HepG2 (cell line): ENCODE measurements at regions of chr2 and their contacts with region 1.

Region 1: DNA sequence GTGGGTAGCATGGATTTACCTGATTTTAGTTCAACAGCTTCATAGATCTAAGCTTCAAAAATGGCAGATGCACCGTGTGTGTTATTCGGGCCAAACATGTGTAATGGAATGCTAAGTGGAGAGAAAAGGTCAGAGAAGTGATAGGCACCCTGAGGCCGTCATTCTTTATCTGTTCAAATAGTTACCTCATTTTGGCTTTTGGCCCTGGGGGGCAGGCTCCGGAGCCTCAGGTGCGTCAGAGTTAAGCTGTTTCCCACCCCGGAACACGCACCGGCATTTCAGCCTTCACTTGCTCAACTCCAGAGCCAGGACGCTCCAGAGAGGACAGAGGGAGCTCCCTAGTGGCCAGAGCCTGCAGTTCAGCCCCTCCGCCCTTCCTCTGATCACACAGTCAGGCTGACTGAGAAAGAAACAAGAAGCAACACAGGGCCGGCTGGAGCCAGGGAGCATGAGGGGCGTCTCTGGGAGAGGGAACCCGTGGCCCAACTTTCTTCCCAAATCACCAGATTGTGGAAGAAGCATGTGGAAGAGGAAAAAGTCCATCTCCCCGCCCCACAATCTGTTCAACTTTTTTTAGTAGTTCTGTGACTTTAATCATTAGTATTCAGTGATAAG is 135.2 kb upstream of the EPC2 start:
- DNase-seq: peak; percentile 90
- ATAC-seq: peak; percentile 99
- H3K4me3 ChIP-seq: peak overlapping the region; percentile 53 to 68 (median 55)
- H3K27ac ChIP-seq: peak overlapping the region; percentile 60
- H3K4me1 ChIP-seq: peaks cover 24% of the 10 kb centered on the region
- H3K27me3 ChIP-seq: no peaks in the 10 kb centered on the region
- CTCF ChIP-seq: peak; percentile 99
- EP300 ChIP-seq: peak; percentile 50 to 62; a peak in 2 of 4 replicates
- POLR2A ChIP-seq: peak in 1 of 2 experiments; percentile 51; a peak in 2 of 4 replicates
- RAD21 ChIP-seq: peak; percentile 97

Region 2: GRCh38 chr2:147937744-147938349 is 571.5 kb before region 1 on chr2:
- CTCF ChIA-PET with region 1: interaction called, 19 read pairs
- POLR2A ChIA-PET with region 1: interaction called, 3 read pairs
- in situ Hi-C with region 1: loop called (anchors 5 kb)
- intact Hi-C with region 1: loop called (anchors 1 kb)
- DNase-seq: peak; percentile 40
- ATAC-seq: peak; percentile 77
- H3K4me3 ChIP-seq: no peak overlapping the region
- H3K27ac ChIP-seq: no peak overlapping the region
- H3K4me1 ChIP-seq: peaks cover 10% of the 10 kb centered on the region
- H3K27me3 ChIP-seq: no peaks in the 10 kb centered on the region
- CTCF ChIP-seq: peak; percentile 80
- EP300 ChIP-seq: no peak
- POLR2A ChIP-seq: no peak
- RAD21 ChIP-seq: peak; percentile 78; the same call in 1 of the 2 replicates

Region 3: DNA sequence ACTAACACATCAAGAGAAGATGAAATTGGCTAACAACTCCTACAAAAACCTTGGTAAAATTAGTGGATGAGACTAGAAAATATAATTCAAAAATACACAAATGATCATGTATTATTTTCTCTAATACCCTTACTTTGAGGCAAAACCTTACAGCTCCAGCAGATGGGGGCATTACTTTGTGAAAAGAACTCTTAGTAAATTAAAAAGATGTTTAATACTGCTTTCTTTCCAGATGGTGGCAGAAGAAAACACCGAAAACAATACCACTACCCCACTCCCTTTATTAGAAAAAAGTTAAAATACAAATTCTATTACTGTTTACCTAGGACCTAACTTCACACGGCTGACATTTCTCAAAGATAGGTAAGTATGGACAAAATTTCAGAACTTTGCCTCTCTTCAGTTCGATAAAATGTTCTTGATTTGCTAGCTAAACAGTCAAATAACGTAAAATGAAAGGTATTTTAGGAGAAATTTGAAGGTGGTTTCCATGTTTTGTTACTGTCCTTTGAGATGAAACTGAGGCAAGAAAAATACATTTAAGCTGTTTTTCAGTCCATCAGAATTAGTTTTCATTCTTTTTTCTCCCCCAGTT is 519.5 kb before region 1 on chr2:
- CTCF ChIA-PET with region 1: interaction called, 10 read pairs
- POLR2A ChIA-PET with region 1: no interaction called
- in situ Hi-C with region 1: no loop called
- intact Hi-C with region 1: loop called (anchors 1 kb)
- DNase-seq: peak; percentile 47
- ATAC-seq: peak; percentile 70
- H3K4me3 ChIP-seq: no peak overlapping the region
- H3K27ac ChIP-seq: no peak overlapping the region
- H3K4me1 ChIP-seq: 0 out of 2 replicates have a peak, but pooled peaks cover 5% of the 10 kb centered on the region
- H3K27me3 ChIP-seq: no peaks in the 10 kb centered on the region
- CTCF ChIP-seq: peak; percentile 40
- EP300 ChIP-seq: no peak
- POLR2A ChIP-seq: no peak
- RAD21 ChIP-seq: peak; percentile 67

Region 4: DNA sequence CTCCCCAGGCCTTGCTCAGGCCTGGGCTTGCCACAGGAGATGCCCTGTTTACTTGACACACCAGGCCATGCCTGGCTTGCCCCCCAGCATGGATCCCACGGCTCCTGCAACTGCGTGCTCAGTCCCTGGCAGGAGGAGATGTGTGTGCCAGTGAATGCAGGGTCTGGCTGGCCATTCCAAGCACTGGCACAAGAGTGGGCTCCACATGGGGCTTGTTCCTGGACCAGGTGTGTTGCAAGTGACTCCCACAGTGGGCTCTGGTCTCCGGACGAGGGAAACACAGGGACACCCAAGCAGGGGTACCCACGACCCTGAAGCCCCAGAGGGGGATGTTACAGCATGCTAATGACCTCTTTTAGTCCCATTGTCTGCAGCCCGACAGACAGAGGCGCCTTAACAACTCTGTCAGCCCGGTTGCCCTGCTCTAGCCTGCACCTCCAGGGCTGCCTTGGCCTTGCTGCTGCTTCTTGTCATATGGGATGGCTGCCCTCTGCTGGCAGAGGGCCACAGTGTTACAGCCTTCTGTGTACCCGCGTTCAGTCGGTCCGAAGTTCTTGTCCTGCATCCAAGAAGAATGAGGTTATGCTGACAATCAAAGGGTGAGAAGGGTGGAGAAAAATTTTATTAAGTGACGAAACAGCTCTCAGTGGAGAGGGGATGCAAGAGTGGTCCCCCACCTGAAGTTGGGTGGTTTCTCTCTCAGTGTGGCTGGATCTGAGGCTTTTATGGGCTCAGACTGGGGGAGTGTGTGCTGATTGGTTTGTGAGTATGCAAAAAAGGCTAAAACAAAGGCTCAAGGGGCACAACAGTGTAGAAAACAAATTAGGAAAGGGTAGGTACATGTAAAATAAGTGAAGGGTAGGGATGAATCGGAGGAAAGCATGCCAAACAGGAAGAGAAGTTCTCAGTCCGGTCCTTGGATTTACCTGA is 308.1 kb before region 1 on chr2:
- CTCF ChIA-PET with region 1: interaction called, 3 read pairs
- POLR2A ChIA-PET with region 1: no interaction called
- in situ Hi-C with region 1: loop called (anchors 10 kb)
- intact Hi-C with region 1: loop called (anchors 1 kb)
- DNase-seq: peak; percentile 87
- ATAC-seq: peak; percentile 100
- H3K4me3 ChIP-seq: no peak overlapping the region
- H3K27ac ChIP-seq: no peak overlapping the region
- H3K4me1 ChIP-seq: peaks cover 11% of the 10 kb centered on the region
- H3K27me3 ChIP-seq: no peaks in the 10 kb centered on the region
- CTCF ChIP-seq: peak; percentile 98
- EP300 ChIP-seq: no peak
- POLR2A ChIP-seq: no peak
- RAD21 ChIP-seq: peak; percentile 92

Region 5: GRCh38 chr2:148209603-148210002 is 299.8 kb before region 1 on chr2:
- CTCF ChIA-PET with region 1: no interaction called
- POLR2A ChIA-PET with region 1: no interaction called
- in situ Hi-C with region 1: loop called (anchors 10 kb)
- intact Hi-C with region 1: loop called (anchors 2 kb)
- DNase-seq: peak; percentile 48
- ATAC-seq: peak; percentile 82
- H3K4me3 ChIP-seq: no peak overlapping the region
- H3K27ac ChIP-seq: no peak overlapping the region
- H3K4me1 ChIP-seq: peaks cover 19% of the 10 kb centered on the region
- H3K27me3 ChIP-seq: no peaks in the 10 kb centered on the region
- CTCF ChIP-seq: peak; percentile 31; the same call in 1 of the 2 replicates
- EP300 ChIP-seq: no peak
- POLR2A ChIP-seq: no peak
- RAD21 ChIP-seq: no peak

Region 6: GRCh38 chr2:148375214-148375613 is 134.2 kb before region 1 on chr2:
- CTCF ChIA-PET with region 1: no interaction called
- POLR2A ChIA-PET with region 1: no interaction called
- in situ Hi-C with region 1: no loop called
- intact Hi-C with region 1: loop called (anchors 10 kb)
- DNase-seq: no peak
- ATAC-seq: no peak
- H3K4me3 ChIP-seq: no peak overlapping the region
- H3K27ac ChIP-seq: no peak overlapping the region
- H3K4me1 ChIP-seq: no peaks in the 10 kb centered on the region
- H3K27me3 ChIP-seq: no peaks in the 10 kb centered on the region
- CTCF ChIP-seq: no peak
- EP300 ChIP-seq: no peak
- POLR2A ChIP-seq: no peak
- RAD21 ChIP-seq: no peak

Region 7: GRCh38 chr2:148483666-148484065 is 25.7 kb before region 1 on chr2:
- CTCF ChIA-PET with region 1: no interaction called
- POLR2A ChIA-PET with region 1: no interaction called
- in situ Hi-C with region 1: no loop called
- intact Hi-C with region 1: no loop called
- DNase-seq: no peak
- ATAC-seq: peak; percentile 48
- H3K4me3 ChIP-seq: no peak overlapping the region
- H3K27ac ChIP-seq: no peak overlapping the region
- H3K4me1 ChIP-seq: no peaks in the 10 kb centered on the region
- H3K27me3 ChIP-seq: no peaks in the 10 kb centered on the region
- CTCF ChIP-seq: no peak
- EP300 ChIP-seq: no peak
- POLR2A ChIP-seq: no peak
- RAD21 ChIP-seq: no peak

Region 8: DNA sequence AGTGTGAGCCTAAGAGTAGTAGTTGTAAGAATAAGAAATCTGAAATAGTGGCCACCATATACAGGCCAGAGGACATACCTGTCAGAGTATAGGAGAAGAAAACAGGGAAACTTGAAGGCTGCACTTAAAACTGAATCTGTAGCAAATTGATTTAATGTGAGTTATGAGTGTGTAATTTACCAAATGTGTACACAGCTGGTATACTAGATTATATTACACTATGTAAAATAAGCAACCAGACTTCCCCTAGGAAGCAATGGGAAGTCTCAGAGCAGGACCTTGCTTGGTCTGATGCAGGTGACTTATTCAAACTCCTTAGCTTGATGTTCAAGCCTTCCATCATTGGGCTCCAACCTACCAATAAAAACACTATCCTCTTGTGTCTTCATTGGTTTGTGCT is 117.8 kb after region 1 on chr2:
- CTCF ChIA-PET with region 1: no interaction called
- POLR2A ChIA-PET with region 1: no interaction called
- in situ Hi-C with region 1: no loop called
- intact Hi-C with region 1: no loop called
- DNase-seq: no peak
- ATAC-seq: no peak
- H3K4me3 ChIP-seq: no peak overlapping the region
- H3K27ac ChIP-seq: no peak overlapping the region
- H3K4me1 ChIP-seq: no peaks in the 10 kb centered on the region
- H3K27me3 ChIP-seq: peaks cover 0 to 9% of the 10 kb centered on the region in 2 experiments; a peak in 1 of 5 replicates
- CTCF ChIP-seq: no peak
- EP300 ChIP-seq: no peak
- POLR2A ChIP-seq: no peak
- RAD21 ChIP-seq: no peak

Region 9: GRCh38 chr2:148989882-148990493 is 480.6 kb after region 1 on chr2:
- CTCF ChIA-PET with region 1: no interaction called
- POLR2A ChIA-PET with region 1: no interaction called
- in situ Hi-C with region 1: no loop called
- intact Hi-C with region 1: loop called (anchors 1 kb)
- DNase-seq: peak; percentile 82
- ATAC-seq: peak; percentile 99
- H3K4me3 ChIP-seq: no peak overlapping the region
- H3K27ac ChIP-seq: no peak overlapping the region
- H3K4me1 ChIP-seq: no peaks in the 10 kb centered on the region
- H3K27me3 ChIP-seq: peaks cover 0 to 1% of the 10 kb centered on the region in 2 experiments; a peak in 3 of 5 replicates
- CTCF ChIP-seq: peak; percentile 81
- EP300 ChIP-seq: no peak
- POLR2A ChIP-seq: no peak
- RAD21 ChIP-seq: peak; percentile 77